ENCODE measurements at regions of chr12 and their contacts with region 1.

Region 1: DNA sequence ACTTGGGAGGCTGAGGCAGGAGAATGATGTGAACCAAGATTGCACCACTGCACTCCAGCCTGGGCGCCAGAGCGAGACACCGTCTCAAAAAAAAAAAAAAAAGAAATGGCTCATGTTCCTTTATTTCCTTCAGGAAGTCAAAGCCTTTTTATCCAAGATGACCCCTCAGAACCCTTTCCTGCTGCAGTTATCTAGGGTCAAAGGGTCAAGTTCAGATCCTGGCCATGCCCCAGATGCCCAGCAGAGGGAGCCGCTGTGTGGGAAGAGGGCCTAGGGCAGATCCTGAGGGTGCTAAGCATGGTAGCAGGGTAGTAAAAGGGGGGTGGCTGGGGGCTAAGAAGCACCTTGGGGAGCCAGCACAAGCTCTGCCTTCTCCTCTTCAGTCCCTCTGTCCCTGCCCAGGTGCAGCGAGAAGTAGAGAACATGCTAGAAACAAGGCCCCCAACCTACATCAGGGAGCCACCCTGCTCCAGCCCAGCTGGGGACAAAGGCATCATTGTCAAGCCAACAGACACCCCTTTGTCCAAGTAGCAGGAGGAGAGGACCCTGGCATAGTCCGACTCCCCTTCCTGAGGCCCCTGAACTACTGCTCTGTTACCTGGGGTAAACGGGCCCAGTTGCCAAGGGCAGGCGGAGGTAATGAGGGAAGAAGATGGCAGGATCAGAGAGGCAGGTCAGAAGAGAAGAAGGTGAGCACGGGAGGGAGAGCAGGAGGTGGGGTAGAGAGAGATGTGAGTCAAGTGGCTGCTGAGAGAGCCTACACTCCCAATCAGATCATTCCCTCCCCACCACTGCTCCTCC is 6.5 kb downstream of the NFE2 start:
- DNase-seq: peak in 28 of 35 experiments; percentile 10 to 66 (median 34)
- ATAC-seq: peak; percentile 39 to 75 (median 62)
- H3K4me3 ChIP-seq: no peak overlapping the region
- H3K4me3 Mint-ChIP-seq: no peak overlapping the region
- H3K27ac ChIP-seq: no peak overlapping the region
- H3K27ac Mint-ChIP-seq: no peak overlapping the region
- H3K4me1 ChIP-seq: peaks cover 0 to 5% of the 10 kb centered on the region in 2 experiments
- H3K4me1 Mint-ChIP-seq: peaks cover 5% of the 10 kb centered on the region in 3 donors
- H3K27me3 ChIP-seq: peaks cover 0 to 11% of the 10 kb centered on the region in 2 experiments
- H3K27me3 Mint-ChIP-seq: peaks cover 6% of the 10 kb centered on the region in 2 donors

Region 2: GRCh38 chr12:54279866-54280467 is 14.4 kb before region 1 on chr12 and contains the start of gene CBX5:
- CTCF ChIA-PET with region 1: interaction called, 4 to 13 read pairs
- POLR2A ChIA-PET with region 1: interaction called in 1 of 2 experiments, 12 read pairs
- DNase-seq: peak; percentile 98 to 100 (median 99)
- ATAC-seq: peak; percentile 55 to 59 (median 56)
- H3K4me3 ChIP-seq: peak within 1 kb of the TSS; percentile 78 to 87
- H3K4me3 Mint-ChIP-seq: no peak within 1 kb of the TSS
- H3K27ac ChIP-seq: peak within 1 kb of the TSS; percentile 98
- H3K27ac Mint-ChIP-seq: no peak within 1 kb of the TSS
- H3K4me1 ChIP-seq: peaks cover 35 to 48% of the 10 kb centered on the region in 2 experiments
- H3K4me1 Mint-ChIP-seq: peaks cover 19 to 51% (median 23%) of the 10 kb centered on the region in 3 donors
- H3K27me3 ChIP-seq: no peaks in the 10 kb centered on the region
- H3K27me3 Mint-ChIP-seq: no peaks in the 10 kb centered on the region
- total RNA-seq, gene CBX5: 43.8 to 54.5 (median 47.1) TPM

Region 3: DNA sequence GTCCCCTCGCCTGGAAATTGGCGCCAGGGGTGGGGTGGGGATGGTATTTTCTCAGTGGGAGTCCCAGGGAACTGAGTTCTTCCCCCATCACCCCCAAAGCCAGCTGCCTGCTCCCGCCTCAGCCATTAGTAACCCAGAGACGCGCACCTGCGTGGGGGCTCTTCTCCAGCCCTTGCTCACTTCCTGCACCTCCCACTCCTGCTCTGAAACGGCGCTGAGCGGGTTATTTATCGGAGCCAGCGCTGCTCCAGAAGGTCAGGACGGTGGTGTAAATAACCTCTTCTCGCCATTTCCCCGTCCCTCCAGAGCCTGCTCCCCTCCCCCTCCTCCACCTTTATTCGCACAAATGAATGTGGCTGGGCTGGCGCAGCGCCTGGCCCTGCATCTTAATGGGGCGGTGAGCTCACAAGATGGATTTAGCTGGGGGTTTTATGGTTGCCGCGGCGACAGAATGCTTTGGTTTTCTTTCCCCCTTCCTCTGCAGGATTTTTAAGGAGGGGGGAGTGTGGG is 57.7 kb after region 1 on chr12:
- CTCF ChIA-PET with region 1: no interaction called
- POLR2A ChIA-PET with region 1: no interaction called
- DNase-seq: peak in 13 of 35 experiments; percentile 9 to 48 (median 20)
- ATAC-seq: peak; percentile 71 to 91 (median 76)
- H3K4me3 ChIP-seq: peak overlapping the region; percentile 29 to 34
- H3K4me3 Mint-ChIP-seq: peak overlapping the region; percentile 63 to 84 (median 73)
- H3K27ac ChIP-seq: peak overlapping the region; percentile 17
- H3K27ac Mint-ChIP-seq: peak overlapping the region; percentile 77 to 80
- H3K4me1 ChIP-seq: peaks cover 0 to 9% of the 10 kb centered on the region in 2 experiments
- H3K4me1 Mint-ChIP-seq: peaks cover 16 to 18% (median 18%) of the 10 kb centered on the region in 3 donors
- H3K27me3 ChIP-seq: no peaks in the 10 kb centered on the region
- H3K27me3 Mint-ChIP-seq: no peaks in the 10 kb centered on the region

Region 4: GRCh38 chr12:54368709-54369583 is 74.6 kb after region 1 on chr12:
- CTCF ChIA-PET with region 1: interaction called in 1 of 2 experiments, 13 read pairs
- POLR2A ChIA-PET with region 1: no interaction called
- DNase-seq: peak; percentile 70 to 93 (median 87)
- ATAC-seq: peak; percentile 88 to 92 (median 91)
- H3K4me3 ChIP-seq: peak overlapping the region; percentile 26 to 29
- H3K4me3 Mint-ChIP-seq: peak overlapping the region; percentile 59 to 71 (median 68)
- H3K27ac ChIP-seq: no peak overlapping the region
- H3K27ac Mint-ChIP-seq: peak overlapping the region in 1 of 2 donors; percentile 57
- H3K4me1 ChIP-seq: peaks cover 15 to 34% of the 10 kb centered on the region in 2 experiments
- H3K4me1 Mint-ChIP-seq: peaks cover 32 to 46% (median 43%) of the 10 kb centered on the region in 3 donors
- H3K27me3 ChIP-seq: peaks cover 0 to 2% of the 10 kb centered on the region in 2 experiments
- H3K27me3 Mint-ChIP-seq: no peaks in the 10 kb centered on the region

Region 5: GRCh38 chr12:54379401-54380201 is 85.2 kb after region 1 on chr12:
- CTCF ChIA-PET with region 1: interaction called, 6 to 10 read pairs
- POLR2A ChIA-PET with region 1: interaction called in 1 of 2 experiments, 9 read pairs
- DNase-seq: peak; percentile 73 to 92 (median 85)
- ATAC-seq: peak; percentile 94 to 98 (median 96)
- H3K4me3 ChIP-seq: peak overlapping the region in 1 of 2 donors; percentile 25
- H3K4me3 Mint-ChIP-seq: peak overlapping the region; percentile 1 to 72 (median 64)
- H3K27ac ChIP-seq: no peak overlapping the region
- H3K27ac Mint-ChIP-seq: peak overlapping the region in 1 of 2 donors; percentile 9
- H3K4me1 ChIP-seq: peaks cover 0 to 8% of the 10 kb centered on the region in 2 experiments
- H3K4me1 Mint-ChIP-seq: peaks cover 8 to 15% (median 10%) of the 10 kb centered on the region in 3 donors
- H3K27me3 ChIP-seq: no peaks in the 10 kb centered on the region
- H3K27me3 Mint-ChIP-seq: no peaks in the 10 kb centered on the region

Measured in T-cell (primary cell).